Left cardiac atrium (tissue), 4 donors: ENCODE measurements at regions of chr5 and their contacts with region 1.

Region 1: DNA sequence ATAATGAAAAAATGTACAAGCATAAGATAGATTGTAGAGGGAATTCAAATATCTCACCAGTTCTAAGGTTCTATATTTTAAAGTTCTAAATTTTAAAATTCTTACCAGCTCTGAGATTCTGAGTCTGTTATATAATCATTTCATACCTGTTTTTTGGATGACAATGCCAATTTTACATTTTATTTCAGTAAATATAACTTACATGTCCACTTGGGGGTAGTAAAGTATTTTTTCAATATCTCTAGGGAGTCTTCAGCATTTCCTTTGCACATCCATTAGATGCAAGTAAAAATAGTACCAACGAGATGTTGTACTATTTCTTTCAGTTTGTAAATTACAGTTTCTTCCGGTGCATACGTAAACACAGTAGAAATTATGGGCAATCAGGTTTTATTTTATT is 25.7 kb downstream of the NMUR2 start:
- DNase-seq: no peak
- ATAC-seq: no peak

Region 2: GRCh38 chr5:152259702-152260101 is 119.6 kb before region 1 on chr5:
- intact Hi-C with region 1: no loop called
- DNase-seq: peak; percentile 26
- ATAC-seq: peak; percentile 63 to 94

Region 3: DNA sequence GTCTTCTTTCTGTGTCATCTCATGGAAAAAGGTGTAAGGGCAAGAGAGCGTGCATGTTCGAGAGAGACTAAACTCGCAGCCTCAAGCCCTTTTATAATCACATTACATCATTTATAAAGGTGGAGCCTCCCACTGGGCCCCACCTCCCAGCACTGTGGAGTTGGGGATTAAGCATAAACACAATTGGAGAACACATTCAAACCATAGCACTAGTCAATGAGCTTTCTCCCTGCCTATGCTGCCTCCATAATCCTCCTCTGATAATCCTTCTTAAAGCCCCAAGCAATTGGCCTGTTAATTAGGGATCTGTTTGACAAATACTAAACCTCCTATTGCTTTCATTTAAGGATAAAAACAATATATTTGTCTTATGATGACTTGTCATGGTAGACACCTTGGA is 73.8 kb before region 1 on chr5:
- intact Hi-C with region 1: no loop called
- DNase-seq: no peak
- ATAC-seq: no peak

Region 4: GRCh38 chr5:152505442-152506042 is 126.2 kb after region 1 on chr5:
- intact Hi-C with region 1: loop called (anchors 2 to 10 kb)
- DNase-seq: peak; percentile 51
- ATAC-seq: peak; percentile 70 to 73